Ovary (tissue), 10 donors: ENCODE measurements at regions of chr9 and their contacts with region 1.

Region 1: GRCh38 chr9:35790385-35791296 is 750 bp upstream of the NPR2 start:
- DNase-seq: peak; percentile 74 to 84 (median 77)
- H3K4me3 ChIP-seq: peak overlapping the region; percentile 33
- H3K27ac ChIP-seq: peak overlapping the region in 1 of 2 donors; percentile 40
- H3K4me1 ChIP-seq: peaks cover 7% of the 10 kb centered on the region
- H3K27me3 ChIP-seq: no peaks in the 10 kb centered on the region
- CTCF ChIP-seq: peak; percentile 68 to 80 (median 76)
- EP300 ChIP-seq: no peak
- POLR2A ChIP-seq: no peak

Region 2: GRCh38 chr9:35859990-35860339 is 69.3 kb after region 1 on chr9:
- intact Hi-C with region 1: loop called in 1 of 4 experiments (anchors 10 kb)
- DNase-seq: no peak
- H3K4me3 ChIP-seq: no peak overlapping the region
- H3K27ac ChIP-seq: no peak overlapping the region
- H3K4me1 ChIP-seq: no peaks in the 10 kb centered on the region
- H3K27me3 ChIP-seq: no peaks in the 10 kb centered on the region
- CTCF ChIP-seq: no peak
- EP300 ChIP-seq: no peak
- POLR2A ChIP-seq: no peak

Region 3: DNA sequence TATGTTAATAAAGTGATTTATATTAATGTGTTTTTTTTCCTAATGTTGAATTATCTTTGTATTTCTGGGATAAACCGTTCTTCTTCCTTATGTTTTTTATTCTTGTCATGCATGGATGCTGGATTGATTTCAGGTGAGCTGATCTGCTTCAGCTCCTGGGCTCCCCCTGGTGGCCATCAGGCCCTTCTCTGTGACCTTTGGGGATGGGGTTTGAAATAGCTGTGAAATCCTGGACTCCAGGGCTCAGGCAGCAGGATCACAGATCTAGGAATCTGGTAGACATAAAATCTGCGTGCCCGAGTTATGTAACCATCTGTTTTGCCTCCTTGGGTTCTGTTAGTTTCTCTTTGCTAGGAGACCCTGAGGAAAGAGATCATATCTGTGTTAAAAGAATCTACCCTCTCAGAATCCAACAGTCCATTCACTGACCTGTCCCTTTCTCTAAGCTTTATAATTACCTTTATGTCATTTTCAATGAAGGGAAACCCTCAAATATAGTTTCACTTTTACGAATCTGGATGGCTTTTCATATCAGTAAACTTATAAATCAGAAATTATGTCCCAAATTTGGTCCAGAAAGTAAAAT is 91.7 kb after region 1 on chr9:
- intact Hi-C with region 1: loop called (anchors 1 to 5 kb)
- DNase-seq: peak; percentile 79 to 89 (median 87)
- H3K4me3 ChIP-seq: no peak overlapping the region
- H3K27ac ChIP-seq: no peak overlapping the region
- H3K4me1 ChIP-seq: no peaks in the 10 kb centered on the region
- H3K27me3 ChIP-seq: no peaks in the 10 kb centered on the region
- CTCF ChIP-seq: peak; percentile 82 to 91 (median 85)
- EP300 ChIP-seq: no peak
- POLR2A ChIP-seq: no peak

Region 4: GRCh38 chr9:35891646-35892045 is 101.0 kb after region 1 on chr9:
- intact Hi-C with region 1: loop called in 2 of 4 experiments (anchors 5 kb)
- DNase-seq: no peak
- H3K4me3 ChIP-seq: no peak overlapping the region
- H3K27ac ChIP-seq: no peak overlapping the region
- H3K4me1 ChIP-seq: no peaks in the 10 kb centered on the region
- H3K27me3 ChIP-seq: no peaks in the 10 kb centered on the region
- CTCF ChIP-seq: no peak
- EP300 ChIP-seq: no peak
- POLR2A ChIP-seq: no peak

Region 5: GRCh38 chr9:35945341-35946018 is 154.8 kb after region 1 on chr9:
- intact Hi-C with region 1: loop called in 2 of 4 experiments (anchors 5 to 10 kb)
- DNase-seq: peak; percentile 85 to 89 (median 88)
- H3K4me3 ChIP-seq: no peak overlapping the region
- H3K27ac ChIP-seq: no peak overlapping the region
- H3K4me1 ChIP-seq: peaks cover 3% of the 10 kb centered on the region
- H3K27me3 ChIP-seq: no peaks in the 10 kb centered on the region
- CTCF ChIP-seq: peak; percentile 61 to 75 (median 72)
- EP300 ChIP-seq: no peak
- POLR2A ChIP-seq: no peak

Region 6: GRCh38 chr9:35972093-35972492 is 181.5 kb after region 1 on chr9:
- intact Hi-C with region 1: no loop called
- DNase-seq: no peak
- H3K4me3 ChIP-seq: no peak overlapping the region
- H3K27ac ChIP-seq: no peak overlapping the region
- H3K4me1 ChIP-seq: no peaks in the 10 kb centered on the region
- H3K27me3 ChIP-seq: no peaks in the 10 kb centered on the region
- CTCF ChIP-seq: no peak
- EP300 ChIP-seq: no peak
- POLR2A ChIP-seq: no peak